K562 (cell line): ENCODE measurements at regions of chr7 and their contacts with region 1.

Region 1: GRCh38 chr7:10708447-10708846 is 265.2 kb upstream of the PHF14 start:
- DNase-seq: peak in 2 of 4 experiments; percentile 32 to 73
- ATAC-seq: peak; percentile 85
- H3K4me3 ChIP-seq: no peak overlapping the region
- H3K27ac ChIP-seq: peak overlapping the region; percentile 4; the same call in 1 of the 3 replicates
- H3K4me1 ChIP-seq: peaks cover 0 to 24% of the 10 kb centered on the region in 2 experiments; a peak in 3 of 5 replicates
- H3K27me3 ChIP-seq: no peaks in the 10 kb centered on the region
- CTCF ChIP-seq: peak; percentile 41 to 64 (median 57); a peak in 5 of 6 replicates
- EP300 ChIP-seq: no peak
- POLR2A ChIP-seq: no peak
- RAD21 ChIP-seq: peak; percentile 48 to 63

Region 2: GRCh38 chr7:9189703-9190102 is 1518.7 kb before region 1 on chr7:
- CTCF ChIA-PET with region 1: no interaction called
- POLR2A ChIA-PET with region 1: no interaction called
- in situ Hi-C with region 1: no loop called
- intact Hi-C with region 1: loop called (anchors 10 kb)
- DNase-seq: no peak
- ATAC-seq: no peak
- H3K4me3 ChIP-seq: no peak overlapping the region
- H3K27ac ChIP-seq: no peak overlapping the region
- H3K4me1 ChIP-seq: no peaks in the 10 kb centered on the region
- H3K27me3 ChIP-seq: no peaks in the 10 kb centered on the region
- CTCF ChIP-seq: no peak
- EP300 ChIP-seq: no peak
- POLR2A ChIP-seq: no peak
- RAD21 ChIP-seq: no peak

Region 3: DNA sequence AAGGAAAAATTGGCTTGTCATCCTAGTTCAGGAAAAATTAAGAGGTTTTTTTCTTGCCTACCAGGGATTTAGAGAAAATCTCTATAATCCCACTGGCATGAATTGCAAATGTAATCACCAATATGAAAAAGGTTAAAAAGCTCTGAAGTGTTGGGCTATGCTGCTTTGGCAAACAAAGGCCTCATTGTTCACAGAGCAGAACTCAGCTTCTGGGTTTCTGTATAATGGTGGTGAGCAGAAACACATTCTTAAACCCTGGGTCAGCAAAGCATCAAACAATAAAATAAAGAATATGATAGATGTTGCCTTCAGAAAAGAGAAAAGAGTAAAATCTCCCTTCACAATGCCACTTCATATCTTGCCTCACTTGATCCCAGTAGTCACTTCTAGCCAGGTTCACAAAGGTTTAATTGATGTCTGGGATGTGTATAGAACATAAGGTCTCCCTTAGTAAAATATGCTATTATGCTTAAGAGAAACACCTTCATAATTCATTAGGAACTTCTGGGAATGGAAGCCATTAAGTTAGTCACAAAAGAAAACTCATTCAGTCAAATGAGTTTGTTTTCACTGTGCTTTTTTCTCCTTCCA is 990.3 kb before region 1 on chr7:
- CTCF ChIA-PET with region 1: no interaction called
- POLR2A ChIA-PET with region 1: no interaction called
- in situ Hi-C with region 1: no loop called
- intact Hi-C with region 1: loop called (anchors 5 kb)
- DNase-seq: no peak
- ATAC-seq: no peak
- H3K4me3 ChIP-seq: no peak overlapping the region
- H3K27ac ChIP-seq: no peak overlapping the region
- H3K4me1 ChIP-seq: no peaks in the 10 kb centered on the region
- H3K27me3 ChIP-seq: no peaks in the 10 kb centered on the region
- CTCF ChIP-seq: no peak
- EP300 ChIP-seq: no peak
- POLR2A ChIP-seq: no peak
- RAD21 ChIP-seq: no peak

Region 4: GRCh38 chr7:10044857-10045256 is 663.6 kb before region 1 on chr7:
- CTCF ChIA-PET with region 1: no interaction called
- POLR2A ChIA-PET with region 1: no interaction called
- in situ Hi-C with region 1: no loop called
- intact Hi-C with region 1: no loop called
- DNase-seq: no peak
- ATAC-seq: no peak
- H3K4me3 ChIP-seq: no peak overlapping the region
- H3K27ac ChIP-seq: no peak overlapping the region
- H3K4me1 ChIP-seq: no peaks in the 10 kb centered on the region
- H3K27me3 ChIP-seq: no peaks in the 10 kb centered on the region
- CTCF ChIP-seq: no peak
- EP300 ChIP-seq: no peak
- POLR2A ChIP-seq: no peak
- RAD21 ChIP-seq: no peak

Region 5: DNA sequence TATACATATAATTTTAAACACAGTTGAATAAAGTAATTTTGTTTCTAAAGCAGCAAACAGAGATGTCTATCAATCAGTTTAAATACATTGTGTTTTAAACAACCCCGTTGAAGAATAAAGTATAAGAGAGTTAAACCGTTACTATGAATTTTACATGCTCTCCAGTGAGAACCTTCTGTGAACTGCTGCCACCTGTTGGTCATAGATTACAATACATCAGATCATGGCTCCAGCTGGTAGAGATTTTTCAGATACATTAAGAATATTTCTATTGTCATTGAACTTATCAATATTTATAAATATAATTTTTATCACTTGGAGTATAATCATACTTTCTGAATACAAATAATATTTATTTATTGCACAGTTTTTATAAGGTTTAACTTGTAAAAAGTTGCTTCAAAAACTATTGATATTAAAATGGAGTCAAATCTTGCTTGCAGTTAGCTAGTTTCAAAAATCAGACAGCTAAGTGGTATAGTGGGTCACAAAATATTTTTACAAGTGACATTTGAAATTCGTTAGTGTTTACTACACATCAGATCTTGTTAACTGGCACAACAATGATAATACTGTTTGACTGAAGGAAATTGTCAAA is 295.9 kb before region 1 on chr7:
- CTCF ChIA-PET with region 1: no interaction called
- POLR2A ChIA-PET with region 1: no interaction called
- in situ Hi-C with region 1: no loop called
- intact Hi-C with region 1: loop called (anchors 10 kb)
- DNase-seq: peak; percentile 33 to 58 (median 36)
- ATAC-seq: peak; percentile 84
- H3K4me3 ChIP-seq: no peak overlapping the region
- H3K27ac ChIP-seq: no peak overlapping the region
- H3K4me1 ChIP-seq: no peaks in the 10 kb centered on the region
- H3K27me3 ChIP-seq: no peaks in the 10 kb centered on the region
- CTCF ChIP-seq: peak; percentile 35 to 60 (median 36); a peak in 4 of 6 replicates
- EP300 ChIP-seq: no peak
- POLR2A ChIP-seq: no peak
- RAD21 ChIP-seq: peak; percentile 44 to 57

Region 6: GRCh38 chr7:10637991-10638390 is 70.5 kb before region 1 on chr7:
- CTCF ChIA-PET with region 1: no interaction called
- POLR2A ChIA-PET with region 1: no interaction called
- in situ Hi-C with region 1: no loop called
- intact Hi-C with region 1: loop called (anchors 5 kb)
- DNase-seq: no peak
- ATAC-seq: no peak
- H3K4me3 ChIP-seq: no peak overlapping the region
- H3K27ac ChIP-seq: no peak overlapping the region
- H3K4me1 ChIP-seq: peaks cover 0 to under 1% of the 10 kb centered on the region in 2 experiments; a peak in 2 of 5 replicates
- H3K27me3 ChIP-seq: no peaks in the 10 kb centered on the region
- CTCF ChIP-seq: no peak
- EP300 ChIP-seq: no peak
- POLR2A ChIP-seq: no peak
- RAD21 ChIP-seq: no peak

Region 7: DNA sequence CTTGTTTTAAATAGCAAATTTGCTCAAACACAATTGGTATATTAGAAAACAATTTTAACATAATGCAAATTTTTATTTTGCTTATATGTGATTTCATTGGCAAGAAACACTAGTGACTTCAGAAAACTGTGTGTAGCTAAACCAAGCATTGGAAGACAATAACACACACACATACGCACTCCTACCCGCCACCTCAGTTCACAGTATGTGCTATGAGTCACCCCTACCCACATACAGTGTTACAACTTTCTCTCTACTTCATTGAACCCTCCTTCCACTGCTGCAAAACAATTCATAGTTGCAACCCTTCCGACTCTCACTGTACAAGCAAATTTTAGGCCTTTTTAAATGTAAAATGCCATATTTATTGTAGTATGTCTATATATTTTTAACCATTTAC is 1243.5 kb after region 1 on chr7:
- CTCF ChIA-PET with region 1: no interaction called
- POLR2A ChIA-PET with region 1: no interaction called
- in situ Hi-C with region 1: no loop called
- intact Hi-C with region 1: no loop called
- DNase-seq: no peak
- ATAC-seq: no peak
- H3K4me3 ChIP-seq: no peak overlapping the region
- H3K27ac ChIP-seq: no peak overlapping the region
- H3K4me1 ChIP-seq: no peaks in the 10 kb centered on the region
- H3K27me3 ChIP-seq: no peaks in the 10 kb centered on the region
- CTCF ChIP-seq: no peak
- EP300 ChIP-seq: no peak
- POLR2A ChIP-seq: no peak
- RAD21 ChIP-seq: no peak